CD8-positive, alpha-beta T cell (primary cell): ENCODE measurements at regions of chr14 and their contacts with region 1.

Region 1: DNA sequence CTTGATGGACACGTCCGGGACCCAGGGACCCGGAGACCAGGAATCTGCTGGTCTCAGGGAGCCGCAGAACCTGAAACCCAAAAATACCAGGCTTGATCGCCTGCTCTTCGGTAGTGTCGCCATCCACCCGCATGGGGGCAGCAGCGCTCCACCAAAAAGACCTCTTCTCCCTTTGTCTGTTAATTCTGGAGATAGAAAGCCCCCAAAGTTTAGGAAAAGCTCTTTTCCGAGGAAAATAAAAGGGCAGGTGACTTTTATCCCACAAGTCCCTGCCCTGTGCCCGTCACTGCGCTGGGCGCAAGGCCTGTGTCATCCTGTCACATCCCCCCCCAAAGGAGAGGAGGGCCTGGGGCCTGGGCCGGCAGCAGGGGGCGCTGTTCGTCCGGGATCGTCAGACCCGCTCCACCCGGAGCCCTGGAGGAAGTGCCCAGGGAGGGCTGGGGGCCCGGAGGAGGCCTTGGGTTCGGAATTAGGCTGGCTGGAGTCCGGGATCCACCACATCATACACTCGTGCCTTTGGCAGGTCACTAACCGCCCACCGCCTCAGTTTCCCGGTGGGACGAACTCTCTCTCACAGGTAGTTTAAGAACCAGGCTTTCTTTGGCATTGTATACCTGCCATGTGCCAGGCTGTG is 31.9 kb downstream of the DAD1 start:
- DNase-seq: peak; percentile 79 to 98 (median 93)
- ATAC-seq: peak; percentile 17
- H3K4me3 ChIP-seq: peak overlapping the region; percentile 46 to 60
- H3K4me3 Mint-ChIP-seq: peak overlapping the region; percentile 81
- H3K27ac ChIP-seq: peak overlapping the region; percentile 86 to 97
- H3K27ac Mint-ChIP-seq: peak overlapping the region; percentile 98
- H3K4me1 ChIP-seq: peaks cover 86% of the 10 kb centered on the region
- H3K4me1 Mint-ChIP-seq: peaks cover 91% of the 10 kb centered on the region
- H3K27me3 ChIP-seq: no peaks in the 10 kb centered on the region
- H3K27me3 Mint-ChIP-seq: no peaks in the 10 kb centered on the region
- CTCF ChIP-seq: peak; percentile 100

Region 2: GRCh38 chr14:21840765-21841164 is 716.3 kb before region 1 on chr14:
- CTCF ChIA-PET with region 1: interaction called, 5 read pairs
- POLR2A ChIA-PET with region 1: interaction called, 5 read pairs
- intact Hi-C with region 1: loop called in 1 of 2 experiments (anchors 1 kb)
- DNase-seq: peak in 2 of 9 experiments; percentile 56 to 66
- ATAC-seq: peak; percentile 56
- H3K4me3 ChIP-seq: no peak overlapping the region
- H3K4me3 Mint-ChIP-seq: peak overlapping the region; percentile 63
- H3K27ac ChIP-seq: no peak overlapping the region
- H3K27ac Mint-ChIP-seq: peak overlapping the region; percentile 80
- H3K4me1 ChIP-seq: no peaks in the 10 kb centered on the region
- H3K4me1 Mint-ChIP-seq: peaks cover 3% of the 10 kb centered on the region
- H3K27me3 ChIP-seq: no peaks in the 10 kb centered on the region
- H3K27me3 Mint-ChIP-seq: peaks cover 15% of the 10 kb centered on the region
- CTCF ChIP-seq: no peak

Region 3: GRCh38 chr14:21978184-21978998 is 578.7 kb before region 1 on chr14:
- CTCF ChIA-PET with region 1: interaction called, 6 read pairs
- POLR2A ChIA-PET with region 1: interaction called, 5 read pairs
- intact Hi-C with region 1: loop called in 1 of 2 experiments (anchors 5 kb)
- DNase-seq: peak in 8 of 9 experiments; percentile 26 to 78 (median 58)
- ATAC-seq: peak; percentile 79
- H3K4me3 ChIP-seq: peak overlapping the region in 1 of 2 experiments; percentile 15
- H3K4me3 Mint-ChIP-seq: peak overlapping the region; percentile 71
- H3K27ac ChIP-seq: no peak overlapping the region
- H3K27ac Mint-ChIP-seq: peak overlapping the region; percentile 72
- H3K4me1 ChIP-seq: peaks cover 3% of the 10 kb centered on the region
- H3K4me1 Mint-ChIP-seq: peaks cover 17% of the 10 kb centered on the region
- H3K27me3 ChIP-seq: no peaks in the 10 kb centered on the region
- H3K27me3 Mint-ChIP-seq: no peaks in the 10 kb centered on the region
- CTCF ChIP-seq: peak; percentile 74

Region 4: GRCh38 chr14:22122227-22122818 is 434.8 kb before region 1 on chr14:
- CTCF ChIA-PET with region 1: interaction called, 5 read pairs
- POLR2A ChIA-PET with region 1: interaction called, 5 read pairs
- intact Hi-C with region 1: loop called in 1 of 2 experiments (anchors 2 kb)
- DNase-seq: peak in 3 of 9 experiments; percentile 24 to 62 (median 43)
- ATAC-seq: peak; percentile 43
- H3K4me3 ChIP-seq: no peak overlapping the region
- H3K4me3 Mint-ChIP-seq: peak overlapping the region; percentile 79
- H3K27ac ChIP-seq: peak overlapping the region in 1 of 2 experiments; percentile 54
- H3K27ac Mint-ChIP-seq: peak overlapping the region; percentile 93
- H3K4me1 ChIP-seq: no peaks in the 10 kb centered on the region
- H3K4me1 Mint-ChIP-seq: peaks cover 19% of the 10 kb centered on the region
- H3K27me3 ChIP-seq: no peaks in the 10 kb centered on the region
- H3K27me3 Mint-ChIP-seq: no peaks in the 10 kb centered on the region
- CTCF ChIP-seq: peak; percentile 14

Region 5: GRCh38 chr14:22497144-22497423 is 60.0 kb before region 1 on chr14:
- CTCF ChIA-PET with region 1: interaction called, 15 read pairs
- POLR2A ChIA-PET with region 1: interaction called, 472 read pairs
- intact Hi-C with region 1: no loop called
- DNase-seq: peak in 1 of 9 experiments; percentile 34
- ATAC-seq: peak; percentile 27
- H3K4me3 ChIP-seq: peak overlapping the region; percentile 53 to 54
- H3K4me3 Mint-ChIP-seq: peak overlapping the region; percentile 84
- H3K27ac ChIP-seq: peak overlapping the region; percentile 38 to 59
- H3K27ac Mint-ChIP-seq: peak overlapping the region; percentile 99
- H3K4me1 ChIP-seq: peaks cover 9% of the 10 kb centered on the region
- H3K4me1 Mint-ChIP-seq: peaks cover 50% of the 10 kb centered on the region
- H3K27me3 ChIP-seq: no peaks in the 10 kb centered on the region
- H3K27me3 Mint-ChIP-seq: no peaks in the 10 kb centered on the region
- CTCF ChIP-seq: no peak

Region 6: GRCh38 chr14:22570132-22570949 is 13.2 kb after region 1 on chr14:
- CTCF ChIA-PET with region 1: interaction called, 408 read pairs
- POLR2A ChIA-PET with region 1: interaction called, 167 read pairs
- intact Hi-C with region 1: loop called (anchors 1 kb)
- DNase-seq: peak; percentile 69 to 99 (median 85)
- ATAC-seq: peak; percentile 87
- H3K4me3 ChIP-seq: peak overlapping the region; percentile 34 to 38
- H3K4me3 Mint-ChIP-seq: peak overlapping the region; percentile 73
- H3K27ac ChIP-seq: peak overlapping the region; percentile 58 to 97
- H3K27ac Mint-ChIP-seq: peak overlapping the region; percentile 97
- H3K4me1 ChIP-seq: peaks cover 51% of the 10 kb centered on the region
- H3K4me1 Mint-ChIP-seq: peaks cover 54% of the 10 kb centered on the region
- H3K27me3 ChIP-seq: no peaks in the 10 kb centered on the region
- H3K27me3 Mint-ChIP-seq: no peaks in the 10 kb centered on the region
- CTCF ChIP-seq: peak; percentile 99

Region 7: GRCh38 chr14:22852940-22853767 is 296.0 kb after region 1 on chr14:
- CTCF ChIA-PET with region 1: interaction called, 10 read pairs
- POLR2A ChIA-PET with region 1: no interaction called
- intact Hi-C with region 1: loop called (anchors 1 kb)
- DNase-seq: peak; percentile 83 to 96 (median 88)
- ATAC-seq: peak; percentile 96
- H3K4me3 ChIP-seq: peak overlapping the region; percentile 58 to 96
- H3K4me3 Mint-ChIP-seq: peak overlapping the region; percentile 83
- H3K27ac ChIP-seq: no peak overlapping the region
- H3K27ac Mint-ChIP-seq: peak overlapping the region; percentile 41
- H3K4me1 ChIP-seq: peaks cover 10% of the 10 kb centered on the region
- H3K4me1 Mint-ChIP-seq: peaks cover 9% of the 10 kb centered on the region
- H3K27me3 ChIP-seq: peaks cover 0 to 8% of the 10 kb centered on the region in 2 experiments
- H3K27me3 Mint-ChIP-seq: peaks cover 15% of the 10 kb centered on the region
- CTCF ChIP-seq: peak; percentile 86